ENCODE measurements at regions of chr13 and their contacts with region 1.

Region 1: GRCh38 chr13:75326173-75327134 is 155.5 kb downstream of the TBC1D4 start:
- DNase-seq: peak; percentile 19 to 88 (median 82)
- ATAC-seq: peak; percentile 94
- H3K4me3 ChIP-seq: peak overlapping the region; percentile 71
- H3K4me3 Mint-ChIP-seq: peak overlapping the region; percentile 90 to 97 (median 94)
- H3K27ac ChIP-seq: peak overlapping the region; percentile 87
- H3K27ac Mint-ChIP-seq: peak overlapping the region; percentile 92 to 99 (median 98)
- H3K4me1 ChIP-seq: peaks cover 4 to 24% of the 10 kb centered on the region in 2 donors
- H3K4me1 Mint-ChIP-seq: peaks cover 22 to 63% (median 55%) of the 10 kb centered on the region in 7 donors
- H3K27me3 ChIP-seq: no peaks in the 10 kb centered on the region
- H3K27me3 Mint-ChIP-seq: no peaks in the 10 kb centered on the region

Region 2: DNA sequence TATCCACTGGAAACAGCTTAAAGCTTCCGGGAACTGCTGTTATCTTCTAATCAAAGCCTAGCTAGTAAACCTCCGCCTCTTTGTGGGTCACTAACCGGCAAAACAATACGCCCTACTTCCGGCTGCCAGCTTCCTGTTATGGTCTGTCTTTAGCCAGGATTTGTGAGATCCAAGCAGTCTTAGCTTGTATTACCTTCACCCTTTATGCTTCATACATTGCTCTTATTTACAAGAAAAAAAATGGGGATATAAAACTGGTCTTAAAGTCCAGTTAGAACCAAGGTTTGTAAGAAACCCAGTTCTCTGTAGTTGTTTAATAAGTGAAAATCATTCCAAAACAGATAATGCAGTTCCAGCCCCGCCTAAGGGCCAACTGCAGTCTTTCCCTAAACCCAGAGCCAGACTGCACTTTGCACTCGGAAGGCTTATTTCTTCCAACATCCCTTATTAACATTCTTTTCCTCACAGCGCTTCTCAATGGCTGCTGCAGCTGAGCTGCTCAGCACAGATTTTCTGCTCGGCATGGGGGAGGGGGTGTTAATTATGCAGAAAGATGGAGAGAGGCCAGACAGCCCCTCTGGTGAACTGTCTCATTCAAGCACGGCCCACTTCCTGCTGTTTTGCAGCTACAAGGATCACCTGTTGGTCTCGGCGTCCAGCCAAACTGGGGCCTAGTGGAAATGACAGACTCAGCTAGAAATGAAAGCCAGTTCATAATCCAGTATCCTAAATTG is 1560.6 kb before region 1 on chr13:
- CTCF ChIA-PET with region 1: no interaction called
- POLR2A ChIA-PET with region 1: interaction called, 7 read pairs
- intact Hi-C with region 1: loop called in 1 of 2 experiments (anchors 5 kb)
- DNase-seq: peak; percentile 29 to 91 (median 85)
- ATAC-seq: peak; percentile 92
- H3K4me3 ChIP-seq: peak overlapping the region; percentile 52
- H3K4me3 Mint-ChIP-seq: peak overlapping the region; percentile 77 to 87 (median 85)
- H3K27ac ChIP-seq: peak overlapping the region; percentile 77
- H3K27ac Mint-ChIP-seq: peak overlapping the region; percentile 90 to 100 (median 98)
- H3K4me1 ChIP-seq: peaks cover 37 to 52% of the 10 kb centered on the region in 2 donors
- H3K4me1 Mint-ChIP-seq: peaks cover 37 to 92% (median 89%) of the 10 kb centered on the region in 7 donors
- H3K27me3 ChIP-seq: no peaks in the 10 kb centered on the region
- H3K27me3 Mint-ChIP-seq: no peaks in the 10 kb centered on the region

Region 3: GRCh38 chr13:75258159-75258782 is 68.2 kb before region 1 on chr13:
- CTCF ChIA-PET with region 1: no interaction called
- POLR2A ChIA-PET with region 1: no interaction called
- intact Hi-C with region 1: no loop called
- DNase-seq: peak in 5 of 9 donors; percentile 5 to 24 (median 15)
- ATAC-seq: no peak
- H3K4me3 ChIP-seq: no peak overlapping the region
- H3K4me3 Mint-ChIP-seq: no peak overlapping the region
- H3K27ac ChIP-seq: no peak overlapping the region
- H3K27ac Mint-ChIP-seq: no peak overlapping the region
- H3K4me1 ChIP-seq: no peaks in the 10 kb centered on the region
- H3K4me1 Mint-ChIP-seq: no peaks in the 10 kb centered on the region
- H3K27me3 ChIP-seq: no peaks in the 10 kb centered on the region
- H3K27me3 Mint-ChIP-seq: peaks cover 3 to 31% (median 8%) of the 10 kb centered on the region in 5 donors

Region 4: DNA sequence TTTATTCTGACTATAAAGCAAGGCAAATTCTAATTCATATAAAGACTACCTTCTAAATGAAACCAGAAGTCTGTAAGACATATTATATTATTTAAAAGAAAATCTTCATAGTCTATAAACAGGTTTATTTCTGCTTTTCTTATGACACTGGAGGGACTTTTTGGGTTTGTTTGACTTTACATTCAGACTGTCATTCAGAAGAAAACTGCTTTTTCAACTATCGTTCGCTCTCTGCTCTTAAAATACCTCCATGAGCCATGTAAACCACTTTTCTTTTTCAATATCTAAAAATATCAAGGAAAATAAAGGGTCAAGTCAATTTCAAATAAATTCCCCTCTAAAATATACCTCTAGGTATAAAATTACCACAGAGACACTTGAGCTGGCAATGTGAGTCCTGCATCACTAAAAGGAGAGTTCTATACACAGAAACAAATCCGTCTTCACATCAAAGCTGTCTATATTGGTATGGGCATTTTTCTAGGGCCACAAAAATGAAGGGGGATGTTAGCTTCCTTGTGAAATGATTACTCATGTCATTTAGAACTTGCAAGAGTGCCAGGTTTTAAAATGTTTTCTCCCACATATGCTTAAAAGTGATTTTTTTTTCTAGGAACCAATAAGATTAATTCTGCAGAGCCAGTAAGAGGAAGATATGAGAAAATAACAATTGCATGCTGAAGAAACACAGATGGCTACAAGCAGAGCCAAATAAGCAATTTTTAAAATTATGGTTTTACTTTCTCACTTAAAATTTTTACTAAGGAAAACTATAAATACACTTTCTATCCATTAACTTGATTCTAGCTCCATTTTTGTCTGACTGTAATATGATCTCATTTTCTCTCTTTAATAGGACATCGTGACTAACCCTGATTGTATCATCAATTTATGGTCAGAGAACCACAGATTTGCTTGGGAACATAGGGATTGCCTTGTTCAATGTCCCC is 26.3 kb before region 1 on chr13:
- CTCF ChIA-PET with region 1: interaction called, 8 read pairs
- POLR2A ChIA-PET with region 1: no interaction called
- intact Hi-C with region 1: loop called in 1 of 2 experiments (anchors 1 kb)
- DNase-seq: no peak
- ATAC-seq: peak; percentile 72
- H3K4me3 ChIP-seq: no peak overlapping the region
- H3K4me3 Mint-ChIP-seq: peak overlapping the region in 4 of 10 donors; percentile 12 to 51 (median 22)
- H3K27ac ChIP-seq: no peak overlapping the region
- H3K27ac Mint-ChIP-seq: peak overlapping the region in 8 of 9 donors; percentile 20 to 79 (median 60)
- H3K4me1 ChIP-seq: peaks cover 0 to 25% of the 10 kb centered on the region in 2 donors
- H3K4me1 Mint-ChIP-seq: peaks cover 14 to 56% (median 44%) of the 10 kb centered on the region in 7 donors
- H3K27me3 ChIP-seq: no peaks in the 10 kb centered on the region
- H3K27me3 Mint-ChIP-seq: no peaks in the 10 kb centered on the region

Region 5: GRCh38 chr13:75365724-75366173 is 39.3 kb after region 1 on chr13:
- CTCF ChIA-PET with region 1: no interaction called
- POLR2A ChIA-PET with region 1: interaction called, 4 read pairs
- intact Hi-C with region 1: loop called in 1 of 2 experiments (anchors 1 kb)
- DNase-seq: peak in 1 of 9 donors; percentile 34
- ATAC-seq: peak; percentile 75
- H3K4me3 ChIP-seq: no peak overlapping the region
- H3K4me3 Mint-ChIP-seq: peak overlapping the region in 1 of 10 donors; percentile 72
- H3K27ac ChIP-seq: no peak overlapping the region
- H3K27ac Mint-ChIP-seq: peak overlapping the region in 1 of 9 donors; percentile 86
- H3K4me1 ChIP-seq: no peaks in the 10 kb centered on the region
- H3K4me1 Mint-ChIP-seq: peaks cover 0 to 25% (median 0%) of the 10 kb centered on the region in 7 donors
- H3K27me3 ChIP-seq: no peaks in the 10 kb centered on the region
- H3K27me3 Mint-ChIP-seq: peaks cover 0 to 8% (median 0%) of the 10 kb centered on the region in 5 donors

Region 6: GRCh38 chr13:75383064-75383715 is 56.7 kb after region 1 on chr13:
- CTCF ChIA-PET with region 1: no interaction called
- POLR2A ChIA-PET with region 1: no interaction called
- intact Hi-C with region 1: no loop called
- DNase-seq: no peak
- ATAC-seq: no peak
- H3K4me3 ChIP-seq: no peak overlapping the region
- H3K4me3 Mint-ChIP-seq: no peak overlapping the region
- H3K27ac ChIP-seq: no peak overlapping the region
- H3K27ac Mint-ChIP-seq: no peak overlapping the region
- H3K4me1 ChIP-seq: no peaks in the 10 kb centered on the region
- H3K4me1 Mint-ChIP-seq: peaks cover 0 to 3% (median 0%) of the 10 kb centered on the region in 7 donors
- H3K27me3 ChIP-seq: no peaks in the 10 kb centered on the region
- H3K27me3 Mint-ChIP-seq: no peaks in the 10 kb centered on the region

Region 7: GRCh38 chr13:75549262-75550158 is 223.1 kb after region 1 on chr13 and contains the start of gene UCHL3:
- CTCF ChIA-PET with region 1: no interaction called
- POLR2A ChIA-PET with region 1: no interaction called
- intact Hi-C with region 1: loop called (anchors 1 kb)
- DNase-seq: peak; percentile 94 to 99 (median 97)
- ATAC-seq: peak; percentile 97
- H3K4me3 ChIP-seq: peak within 1 kb of the TSS; percentile 95
- H3K4me3 Mint-ChIP-seq: peak within 1 kb of the TSS; percentile 91 to 99 (median 96)
- H3K27ac ChIP-seq: peak within 1 kb of the TSS; percentile 84
- H3K27ac Mint-ChIP-seq: peak within 1 kb of the TSS; percentile 94 to 99 (median 98)
- H3K4me1 ChIP-seq: peaks cover 15% of the 10 kb centered on the region in 2 donors
- H3K4me1 Mint-ChIP-seq: peaks cover 27 to 53% (median 46%) of the 10 kb centered on the region in 7 donors
- H3K27me3 ChIP-seq: no peaks in the 10 kb centered on the region
- H3K27me3 Mint-ChIP-seq: peaks cover 0 to 2% (median 0%) of the 10 kb centered on the region in 5 donors
- total RNA-seq, gene UCHL3: 18.6 to 35.8 (median 20.6) TPM

Region 8: GRCh38 chr13:76886292-76887075 is 1560.0 kb after region 1 on chr13 and contains the start of gene KCTD12:
- CTCF ChIA-PET with region 1: no interaction called
- POLR2A ChIA-PET with region 1: no interaction called
- intact Hi-C with region 1: loop called in 1 of 2 experiments (anchors 5 kb)
- DNase-seq: peak; percentile 73 to 84 (median 80)
- ATAC-seq: peak; percentile 86
- H3K4me3 ChIP-seq: peak within 1 kb of the TSS; percentile 62
- H3K4me3 Mint-ChIP-seq: peak within 1 kb of the TSS; percentile 88 to 95 (median 92)
- H3K27ac ChIP-seq: peak within 1 kb of the TSS; percentile 55
- H3K27ac Mint-ChIP-seq: peak within 1 kb of the TSS; percentile 63 to 85 (median 76)
- H3K4me1 ChIP-seq: peaks cover 4 to 8% of the 10 kb centered on the region in 2 donors
- H3K4me1 Mint-ChIP-seq: peaks cover 20 to 37% (median 32%) of the 10 kb centered on the region in 7 donors
- H3K27me3 ChIP-seq: peaks cover 0 to 3% of the 10 kb centered on the region in 2 donors
- H3K27me3 Mint-ChIP-seq: peaks cover 0 to 47% (median 8%) of the 10 kb centered on the region in 5 donors
- total RNA-seq, gene KCTD12: 7.6 to 48.0 (median 14.0) TPM

Measured in naive thymus-derived CD4-positive, alpha-beta T cell (primary cell).